Endothelial cell of umbilical vein (primary cell): ENCODE measurements at regions of chr12 and their contacts with region 1.

Region 1: GRCh38 chr12:66144791-66145754 is 14.5 kb upstream of the LLPH start:
- DNase-seq: peak; percentile 88
- H3K4me3 ChIP-seq: peak overlapping the region in 1 of 3 experiments; percentile 46
- H3K27ac ChIP-seq: peak overlapping the region; percentile 62
- H3K4me1 ChIP-seq: peaks cover 20% of the 10 kb centered on the region
- H3K27me3 ChIP-seq: no peaks in the 10 kb centered on the region
- CTCF ChIP-seq: peak; percentile 59 to 62
- POLR2A ChIP-seq: peak; percentile 23

Region 2: GRCh38 chr12:65911321-65911720 is 233.8 kb before region 1 on chr12:
- CTCF ChIA-PET with region 1: no interaction called
- POLR2A ChIA-PET with region 1: no interaction called
- dilution Hi-C with region 1: no loop called
- intact Hi-C with region 1: no loop called
- DNase-seq: peak; percentile 77
- H3K4me3 ChIP-seq: no peak overlapping the region
- H3K27ac ChIP-seq: no peak overlapping the region
- H3K4me1 ChIP-seq: peaks cover 9% of the 10 kb centered on the region
- H3K27me3 ChIP-seq: no peaks in the 10 kb centered on the region
- CTCF ChIP-seq: no peak
- POLR2A ChIP-seq: no peak

Region 3: DNA sequence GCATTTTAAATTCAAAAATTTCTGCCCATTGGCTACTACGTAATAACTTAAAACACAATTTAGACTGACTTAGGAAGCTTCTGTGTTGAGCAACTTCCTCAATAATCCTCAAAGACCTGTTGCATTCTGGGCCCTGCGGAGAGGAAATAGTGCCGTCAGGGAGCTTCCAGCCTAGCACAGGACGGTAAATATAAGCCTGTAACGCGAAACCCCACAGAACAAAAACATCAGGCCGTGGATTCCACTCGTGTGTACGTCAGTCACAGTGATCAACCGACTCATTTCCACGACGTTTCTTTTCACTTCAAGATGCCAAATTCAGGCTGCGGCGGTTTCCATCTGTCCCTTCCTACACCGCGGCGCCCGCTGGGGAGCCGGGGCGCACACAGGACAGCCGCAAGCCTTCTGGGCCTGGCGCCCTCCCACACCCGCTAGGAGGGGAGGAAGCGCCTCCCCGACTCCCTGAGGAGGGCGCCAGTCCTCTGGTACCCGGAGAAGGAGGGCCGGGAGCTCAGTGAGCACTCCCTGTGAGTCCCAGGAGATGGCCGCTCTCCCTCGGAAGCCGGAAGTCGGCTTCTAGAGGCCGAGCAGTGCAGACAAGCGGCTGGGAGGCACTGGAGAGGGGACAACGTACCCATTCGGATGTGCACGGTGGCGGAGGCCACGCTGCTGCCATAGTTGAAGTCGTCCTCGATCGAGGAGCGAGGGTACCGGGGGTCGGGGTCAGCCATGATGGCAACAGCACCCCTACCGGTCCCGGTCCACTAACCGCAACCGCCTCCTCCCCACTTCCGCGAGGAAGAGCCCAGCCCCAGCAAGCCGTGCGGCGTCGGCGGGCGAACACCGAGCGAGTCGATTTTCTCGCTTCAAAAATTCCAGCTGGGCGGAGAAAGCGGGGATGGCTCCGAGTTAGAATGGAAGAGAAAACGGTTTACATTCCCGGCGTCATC is 24.4 kb after region 1 on chr12 and contains the start of gene TMBIM4:
- CTCF ChIA-PET with region 1: interaction called, 27 read pairs
- POLR2A ChIA-PET with region 1: interaction called, 10 read pairs
- dilution Hi-C with region 1: no loop called
- intact Hi-C with region 1: loop called (anchors 1 kb)
- DNase-seq: peak; percentile 92
- H3K4me3 ChIP-seq: peak within 1 kb of the TSS; percentile 54 to 99 (median 88)
- H3K27ac ChIP-seq: peak within 1 kb of the TSS; percentile 81
- H3K4me1 ChIP-seq: peaks cover 7% of the 10 kb centered on the region
- H3K27me3 ChIP-seq: no peaks in the 10 kb centered on the region
- CTCF ChIP-seq: peak; percentile 33 to 63
- POLR2A ChIP-seq: no peak
- total RNA-seq, gene TMBIM4: 74.1 and 78.1 TPM in 2 replicates

Region 4: GRCh38 chr12:66269757-66270383 is 124.8 kb after region 1 on chr12:
- CTCF ChIA-PET with region 1: interaction called, 38 read pairs
- POLR2A ChIA-PET with region 1: no interaction called
- dilution Hi-C with region 1: no loop called
- intact Hi-C with region 1: loop called (anchors 2 kb)
- DNase-seq: peak; percentile 34
- H3K4me3 ChIP-seq: no peak overlapping the region
- H3K27ac ChIP-seq: no peak overlapping the region
- H3K4me1 ChIP-seq: no peaks in the 10 kb centered on the region
- H3K27me3 ChIP-seq: peaks cover 0 to 4% of the 10 kb centered on the region in 2 experiments
- CTCF ChIP-seq: peak; percentile 56 to 58
- POLR2A ChIP-seq: no peak

Region 5: DNA sequence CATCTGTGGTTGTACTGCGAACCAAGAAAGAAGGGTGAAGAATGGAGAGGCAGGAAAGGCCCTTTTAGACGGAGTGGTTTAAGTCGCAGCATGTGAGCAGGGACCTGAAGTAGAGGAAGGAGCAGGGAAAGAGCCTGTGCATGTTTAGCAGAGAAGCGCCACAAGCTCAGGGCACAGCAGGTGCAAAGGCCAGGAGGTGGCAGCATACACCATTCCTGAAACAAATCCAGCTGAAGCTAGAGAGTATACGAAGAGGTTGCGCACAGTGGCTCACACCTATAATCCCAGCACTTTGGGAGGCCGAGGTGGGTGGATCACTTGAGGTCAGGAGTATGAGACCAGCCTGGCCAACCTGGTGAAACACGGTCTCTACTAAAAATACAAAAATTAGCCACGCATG is 207.1 kb after region 1 on chr12:
- CTCF ChIA-PET with region 1: interaction called, 14 read pairs
- POLR2A ChIA-PET with region 1: no interaction called
- dilution Hi-C with region 1: no loop called
- intact Hi-C with region 1: no loop called
- DNase-seq: peak; percentile 27
- H3K4me3 ChIP-seq: no peak overlapping the region
- H3K27ac ChIP-seq: no peak overlapping the region
- H3K4me1 ChIP-seq: no peaks in the 10 kb centered on the region
- H3K27me3 ChIP-seq: no peaks in the 10 kb centered on the region
- CTCF ChIP-seq: peak; percentile 19 to 35
- POLR2A ChIP-seq: no peak

Region 6: GRCh38 chr12:66708704-66709456 is 563.8 kb after region 1 on chr12:
- CTCF ChIA-PET with region 1: interaction called, 10 read pairs
- POLR2A ChIA-PET with region 1: no interaction called
- dilution Hi-C with region 1: no loop called
- intact Hi-C with region 1: loop called (anchors 5 kb)
- DNase-seq: peak; percentile 34
- H3K4me3 ChIP-seq: no peak overlapping the region
- H3K27ac ChIP-seq: no peak overlapping the region
- H3K4me1 ChIP-seq: no peaks in the 10 kb centered on the region
- H3K27me3 ChIP-seq: peaks cover 5 to 23% of the 10 kb centered on the region in 2 experiments
- CTCF ChIP-seq: peak; percentile 7 to 15
- POLR2A ChIP-seq: no peak